Natural killer cell (primary cell): ENCODE measurements at regions of chr2 and their contacts with region 1.

Region 1: GRCh38 chr2:223760838-223761502 is 76.4 kb downstream of the AP1S3 start:
- DNase-seq: peak; percentile 76 to 80
- ATAC-seq: peak; percentile 83 to 93 (median 89)
- H3K4me3 ChIP-seq: peak overlapping the region; percentile 27
- H3K4me3 Mint-ChIP-seq: peak overlapping the region; percentile 86
- H3K27ac ChIP-seq: peak overlapping the region; percentile 95
- H3K27ac Mint-ChIP-seq: peak overlapping the region; percentile 96 to 97
- H3K4me1 ChIP-seq: peaks cover 35% of the 10 kb centered on the region
- H3K4me1 Mint-ChIP-seq: peaks cover 30 to 39% of the 10 kb centered on the region in 2 donors
- H3K27me3 ChIP-seq: no peaks in the 10 kb centered on the region
- H3K27me3 Mint-ChIP-seq: no peaks in the 10 kb centered on the region
- CTCF ChIP-seq: peak; percentile 62

Region 2: DNA sequence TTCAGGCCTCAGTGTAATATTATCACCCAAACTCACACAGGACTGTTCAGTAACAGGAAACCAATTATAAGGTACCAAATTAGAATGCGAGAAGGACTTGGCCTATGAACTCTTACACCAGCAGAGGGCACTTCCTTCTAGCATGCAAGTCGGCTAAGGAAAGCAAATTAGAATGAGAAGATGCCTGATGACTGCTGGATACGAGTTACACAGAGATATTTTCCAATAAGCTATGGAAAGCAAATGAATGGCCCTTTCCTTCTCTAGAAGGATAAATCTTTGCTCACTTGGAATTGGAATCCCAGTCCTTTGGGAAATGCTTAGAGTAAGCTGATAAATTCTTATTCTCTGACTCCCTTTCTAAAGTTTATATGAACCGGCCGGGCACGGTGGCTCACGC is 33.4 kb before region 1 on chr2:
- intact Hi-C with region 1: loop called (anchors 5 kb)
- DNase-seq: peak; percentile 22 to 67
- ATAC-seq: peak; percentile 85 to 97 (median 93)
- H3K4me3 ChIP-seq: no peak overlapping the region
- H3K4me3 Mint-ChIP-seq: no peak overlapping the region
- H3K27ac ChIP-seq: no peak overlapping the region
- H3K27ac Mint-ChIP-seq: peak overlapping the region in 1 of 2 donors; percentile 42
- H3K4me1 ChIP-seq: peaks cover 3% of the 10 kb centered on the region
- H3K4me1 Mint-ChIP-seq: peaks cover 5 to 7% of the 10 kb centered on the region in 2 donors
- H3K27me3 ChIP-seq: no peaks in the 10 kb centered on the region
- H3K27me3 Mint-ChIP-seq: peaks cover 5 to 6% of the 10 kb centered on the region in 2 donors
- CTCF ChIP-seq: peak; percentile 65

Region 3: DNA sequence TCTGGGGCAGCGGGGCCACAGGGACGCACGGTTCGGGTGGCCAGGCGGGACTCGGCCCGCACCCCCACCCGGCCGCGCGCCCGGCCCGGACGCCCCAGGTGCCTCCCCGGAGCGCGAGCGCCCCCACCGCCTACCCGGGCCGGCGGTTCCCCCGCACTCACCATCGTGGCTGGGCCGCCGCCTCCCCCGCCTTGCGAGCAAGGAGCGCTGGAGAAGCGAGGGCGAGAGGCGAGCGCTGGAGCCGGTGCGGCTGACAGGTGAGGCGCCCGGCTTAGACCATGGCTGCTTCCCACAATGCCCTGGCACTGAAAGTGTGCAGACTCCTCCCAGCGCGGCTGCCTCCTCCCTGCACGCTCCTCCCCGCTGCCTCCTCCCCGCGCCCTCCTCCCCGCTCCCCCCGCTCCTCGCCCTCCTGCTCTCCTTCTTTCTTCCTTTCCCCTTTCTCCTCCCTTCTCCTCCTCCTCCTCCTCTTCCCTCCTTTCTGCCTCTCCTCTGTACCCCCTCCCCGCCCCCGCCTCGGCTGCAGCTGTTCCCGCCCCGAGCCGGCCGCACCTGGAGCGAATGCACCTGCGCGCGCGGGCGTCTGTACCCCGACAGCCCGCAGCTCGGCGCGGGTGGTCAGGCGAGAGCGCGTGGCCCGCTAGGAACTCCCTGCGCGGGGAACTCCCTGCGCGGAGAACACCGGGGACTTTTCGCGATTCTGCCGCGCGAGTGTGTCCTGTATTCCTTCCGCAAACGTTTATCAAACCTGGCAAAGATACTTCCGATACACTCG is 76.5 kb after region 1 on chr2 and contains the start of gene AP1S3:
- intact Hi-C with region 1: loop called (anchors 1 kb)
- DNase-seq: peak; percentile 76 to 91
- ATAC-seq: peak; percentile 88 to 92 (median 89)
- H3K4me3 ChIP-seq: peak within 1 kb of the TSS; percentile 65
- H3K4me3 Mint-ChIP-seq: peak within 1 kb of the TSS; percentile 92
- H3K27ac ChIP-seq: peak within 1 kb of the TSS; percentile 74
- H3K27ac Mint-ChIP-seq: peak within 1 kb of the TSS; percentile 84 to 86
- H3K4me1 ChIP-seq: peaks cover 21% of the 10 kb centered on the region
- H3K4me1 Mint-ChIP-seq: peaks cover 12 to 15% of the 10 kb centered on the region in 2 donors
- H3K27me3 ChIP-seq: no peaks in the 10 kb centered on the region
- H3K27me3 Mint-ChIP-seq: no peaks in the 10 kb centered on the region
- CTCF ChIP-seq: no peak
- total RNA-seq, gene AP1S3: 4.5 to 5.2 (median 5.0) TPM

Region 4: GRCh38 chr2:223944703-223945531 is 183.9 kb after region 1 on chr2 and contains the start of gene WDFY1:
- intact Hi-C with region 1: loop called (anchors 1 kb)
- DNase-seq: peak; percentile 72 to 85
- ATAC-seq: peak; percentile 73 to 92 (median 85)
- H3K4me3 ChIP-seq: peak within 1 kb of the TSS; percentile 85
- H3K4me3 Mint-ChIP-seq: peak within 1 kb of the TSS; percentile 95
- H3K27ac ChIP-seq: peak within 1 kb of the TSS; percentile 61
- H3K27ac Mint-ChIP-seq: peak within 1 kb of the TSS; percentile 81 to 93
- H3K4me1 ChIP-seq: peaks cover 44% of the 10 kb centered on the region
- H3K4me1 Mint-ChIP-seq: peaks cover 41 to 44% of the 10 kb centered on the region in 2 donors
- H3K27me3 ChIP-seq: no peaks in the 10 kb centered on the region
- H3K27me3 Mint-ChIP-seq: no peaks in the 10 kb centered on the region
- CTCF ChIP-seq: no peak
- total RNA-seq, gene WDFY1: 90.2 to 96.2 (median 92.0) TPM